Heart left ventricle (tissue), 16 donors: ENCODE measurements at regions of chr15 and their contacts with region 1.

Region 1: GRCh38 chr15:77409259-77410156 is 10.4 kb downstream of the PEAK1 start:
- DNase-seq: no peak
- ATAC-seq: no peak
- H3K4me3 ChIP-seq: no peak overlapping the region
- H3K27ac ChIP-seq: peak overlapping the region in 1 of 12 donors; percentile 60
- H3K4me1 ChIP-seq: peaks cover 0 to 59% (median 45%) of the 10 kb centered on the region in 12 donors
- H3K27me3 ChIP-seq: no peaks in the 10 kb centered on the region
- CTCF ChIP-seq: no peak
- POLR2A ChIP-seq: no peak

Region 2: DNA sequence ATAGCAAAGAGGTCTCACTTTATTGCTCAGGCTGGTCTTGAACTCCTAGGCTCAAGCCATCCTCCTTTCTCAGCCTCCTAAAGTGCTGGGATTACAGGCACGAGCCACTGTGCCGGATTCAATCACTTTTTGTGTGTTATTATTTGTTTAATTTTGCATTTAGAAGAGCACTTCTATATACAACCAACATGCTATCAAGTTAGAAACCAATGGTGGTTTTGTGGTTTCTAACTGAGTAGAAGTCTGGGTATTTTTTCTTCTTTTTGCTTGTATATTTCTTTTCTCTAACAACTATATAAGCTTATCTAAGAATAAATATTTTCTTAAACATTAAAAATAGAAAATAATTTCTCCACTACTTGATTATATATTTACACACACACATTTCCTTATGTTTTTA is 76.3 kb before region 1 on chr15:
- intact Hi-C with region 1: loop called in 1 of 10 experiments (anchors 5 kb)
- DNase-seq: no peak
- ATAC-seq: no peak
- H3K4me3 ChIP-seq: no peak overlapping the region
- H3K27ac ChIP-seq: no peak overlapping the region
- H3K4me1 ChIP-seq: peaks cover 0 to 47% (median 24%) of the 10 kb centered on the region in 12 donors
- H3K27me3 ChIP-seq: no peaks in the 10 kb centered on the region
- CTCF ChIP-seq: no peak
- POLR2A ChIP-seq: no peak

Region 3: DNA sequence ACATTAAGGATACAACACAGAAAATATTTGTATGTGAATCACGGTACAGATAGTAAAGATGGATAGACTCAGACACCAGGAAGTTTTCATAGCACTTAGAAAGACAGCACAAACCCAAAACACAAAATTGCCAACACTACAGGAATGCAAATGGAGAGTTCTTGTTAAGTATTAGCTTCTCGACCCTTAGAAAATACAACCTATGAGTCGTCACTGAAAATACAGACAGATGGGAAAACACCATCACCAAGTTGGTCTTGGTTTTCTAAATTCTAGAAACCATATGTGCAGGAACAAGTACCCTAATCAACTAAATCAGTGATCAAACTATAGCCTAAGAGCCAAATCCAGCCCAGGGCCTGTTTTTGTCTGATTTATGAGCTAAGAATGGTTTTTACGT is 40.3 kb before region 1 on chr15:
- intact Hi-C with region 1: loop called in 2 of 10 experiments (anchors 5 to 10 kb)
- DNase-seq: no peak
- ATAC-seq: no peak
- H3K4me3 ChIP-seq: no peak overlapping the region
- H3K27ac ChIP-seq: no peak overlapping the region
- H3K4me1 ChIP-seq: peaks cover 0 to 24% (median 4%) of the 10 kb centered on the region in 12 donors
- H3K27me3 ChIP-seq: no peaks in the 10 kb centered on the region
- CTCF ChIP-seq: no peak
- POLR2A ChIP-seq: no peak